PC-9 (cell line): ENCODE measurements at regions of chr2 and their contacts with region 1.

Region 1: DNA sequence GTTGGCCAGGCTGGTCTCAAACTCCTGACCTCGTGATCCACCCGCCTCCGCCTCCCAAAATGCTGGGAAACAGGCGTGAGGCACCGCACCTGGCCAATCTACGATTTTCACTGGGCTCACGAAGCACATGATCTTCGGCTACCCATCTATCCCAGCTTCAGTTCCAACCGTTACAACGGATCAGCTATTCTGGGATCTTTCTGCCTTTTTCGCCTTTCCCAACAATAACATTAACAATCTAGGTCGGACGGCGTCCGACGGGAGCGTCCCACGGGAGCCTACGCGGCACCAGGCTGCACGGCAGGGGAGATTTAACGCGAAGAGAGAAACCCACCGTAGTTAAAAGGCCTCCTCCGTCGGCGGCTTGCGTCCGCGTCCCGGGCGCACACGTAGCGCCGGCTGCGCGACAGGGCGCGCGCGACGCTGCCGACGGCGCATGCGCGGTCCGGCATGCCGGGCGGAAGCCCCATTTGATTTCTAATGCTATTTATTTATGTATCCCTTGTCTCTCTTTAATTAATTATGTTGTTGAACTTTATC is at the start of gene MSL3B:
- DNase-seq: peak; percentile 46 to 75
- H3K4me3 ChIP-seq: peak within 1 kb of the TSS; percentile 64
- H3K27ac ChIP-seq: peak within 1 kb of the TSS; percentile 58
- H3K4me1 ChIP-seq: peaks cover 24% of the 10 kb centered on the region
- H3K27me3 ChIP-seq: peaks cover 5% of the 10 kb centered on the region; the same call in 1 of the 2 replicates
- CTCF ChIP-seq: no peak

Region 2: GRCh38 chr2:233261819-233262555 is 606.1 kb before region 1 on chr2:
- CTCF ChIA-PET with region 1: interaction called, 10 read pairs
- POLR2A ChIA-PET with region 1: no interaction called
- intact Hi-C with region 1: no loop called
- DNase-seq: no peak
- H3K4me3 ChIP-seq: no peak overlapping the region
- H3K27ac ChIP-seq: no peak overlapping the region
- H3K4me1 ChIP-seq: no peaks in the 10 kb centered on the region
- H3K27me3 ChIP-seq: no peaks in the 10 kb centered on the region
- CTCF ChIP-seq: no peak

Region 3: DNA sequence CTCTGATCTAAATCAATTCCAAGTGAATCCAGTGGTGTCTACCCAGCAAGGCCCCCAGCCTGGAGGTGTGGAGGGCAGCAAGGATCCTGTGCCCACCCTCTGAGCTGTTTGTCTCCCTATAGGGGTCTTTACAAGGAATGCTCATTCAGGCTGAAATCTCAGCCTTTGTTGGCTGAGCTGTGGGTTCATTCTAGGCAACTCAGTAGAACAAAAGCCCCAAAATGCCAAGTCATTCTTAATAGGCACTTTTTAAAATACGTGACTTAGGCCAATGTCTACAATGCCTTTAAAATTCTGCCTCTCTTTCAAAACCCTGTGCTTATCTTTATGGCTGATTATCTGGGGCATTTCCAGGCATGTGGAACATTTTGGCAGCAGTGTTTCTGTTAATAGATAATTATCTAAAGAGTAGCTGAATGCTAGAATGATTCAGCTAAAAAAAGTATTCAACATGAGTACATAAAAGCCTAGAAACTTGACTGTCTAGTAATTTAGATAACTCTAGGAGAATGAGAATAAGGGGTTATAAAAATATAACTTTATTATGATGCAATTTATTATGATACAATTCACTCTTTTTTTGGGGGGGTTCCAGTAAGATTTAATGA is 167.9 kb before region 1 on chr2:
- CTCF ChIA-PET with region 1: no interaction called
- POLR2A ChIA-PET with region 1: interaction called, 12 read pairs
- intact Hi-C with region 1: no loop called
- DNase-seq: peak; percentile 67 to 98
- H3K4me3 ChIP-seq: peak overlapping the region; percentile 69; the same call in 1 of the 2 replicates
- H3K27ac ChIP-seq: peak overlapping the region; percentile 97
- H3K4me1 ChIP-seq: peaks cover 92% of the 10 kb centered on the region
- H3K27me3 ChIP-seq: no peaks in the 10 kb centered on the region
- CTCF ChIP-seq: no peak

Region 4: GRCh38 chr2:234241656-234242458 is 373.8 kb after region 1 on chr2:
- CTCF ChIA-PET with region 1: no interaction called
- POLR2A ChIA-PET with region 1: no interaction called
- intact Hi-C with region 1: loop called (anchors 10 kb)
- DNase-seq: peak; percentile 68 to 95
- H3K4me3 ChIP-seq: peak overlapping the region; percentile 36; the same call in 1 of the 2 replicates
- H3K27ac ChIP-seq: peak overlapping the region; percentile 91
- H3K4me1 ChIP-seq: peaks cover 68% of the 10 kb centered on the region
- H3K27me3 ChIP-seq: no peaks in the 10 kb centered on the region
- CTCF ChIP-seq: no peak

Region 5: DNA sequence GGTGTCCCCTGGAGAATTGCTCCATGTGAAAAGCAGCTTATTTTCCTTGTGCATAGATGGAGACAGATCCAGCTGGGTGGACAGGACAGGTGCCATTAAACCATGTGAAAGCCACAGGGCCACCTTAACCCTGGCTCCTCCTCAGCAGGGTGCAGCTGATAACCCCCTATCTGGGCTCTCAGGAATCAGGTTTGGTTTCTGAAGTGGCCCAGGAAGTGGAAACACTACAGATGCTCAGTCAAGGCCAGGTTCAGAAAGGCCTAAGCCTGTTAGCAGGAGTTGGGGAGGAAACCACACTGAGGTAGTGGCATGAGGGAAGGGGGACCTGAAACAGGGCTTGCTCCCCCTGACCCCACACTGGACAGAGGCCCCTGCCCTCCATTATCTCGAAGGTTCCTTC is 399.5 kb after region 1 on chr2:
- CTCF ChIA-PET with region 1: no interaction called
- POLR2A ChIA-PET with region 1: no interaction called
- intact Hi-C with region 1: no loop called
- DNase-seq: no peak
- H3K4me3 ChIP-seq: no peak overlapping the region
- H3K27ac ChIP-seq: no peak overlapping the region
- H3K4me1 ChIP-seq: peaks cover 28% of the 10 kb centered on the region
- H3K27me3 ChIP-seq: no peaks in the 10 kb centered on the region
- CTCF ChIP-seq: no peak